B cell (primary cell): ENCODE measurements at regions of chr21 and their contacts with region 1.

Region 1: DNA sequence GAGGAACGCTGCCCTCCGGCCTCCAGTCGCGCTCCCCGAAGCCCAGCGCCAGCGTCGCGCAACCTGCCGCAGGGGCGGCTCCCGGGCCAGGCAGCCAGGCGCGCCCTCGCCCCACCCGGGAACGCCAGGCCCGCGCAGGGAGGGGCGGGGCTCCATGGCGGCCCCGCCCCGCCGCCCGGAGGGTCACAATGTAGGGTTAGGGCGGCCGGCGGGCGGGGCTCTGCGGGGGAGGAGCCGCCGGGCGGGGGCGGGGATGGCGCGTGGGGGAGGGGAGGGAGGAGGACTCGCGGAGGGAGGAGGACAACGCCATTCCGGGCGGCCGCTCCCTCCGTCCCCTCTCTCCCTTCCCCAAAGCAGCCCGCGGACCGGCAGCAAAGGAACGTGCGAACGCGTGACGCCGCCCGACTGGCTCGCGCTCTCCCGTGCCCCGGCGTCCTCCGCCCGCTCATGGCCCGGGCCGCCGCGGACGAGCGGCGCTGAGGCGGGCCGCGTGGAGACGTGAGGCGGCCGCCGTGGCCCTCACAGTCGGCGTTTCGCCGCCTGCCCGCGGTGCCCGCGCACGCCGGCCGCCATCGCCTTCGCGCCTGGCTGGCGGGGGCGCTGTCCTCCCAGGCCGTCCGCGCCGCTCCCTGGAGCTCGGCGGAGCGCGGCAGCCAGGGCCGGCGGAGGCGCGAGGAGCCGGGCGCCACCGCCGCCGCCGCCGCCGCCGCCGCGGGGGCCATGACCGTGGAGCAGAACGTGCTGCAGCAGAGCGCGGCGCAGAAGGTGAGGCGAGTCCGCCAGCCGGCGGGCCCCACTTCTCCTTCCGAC is at the start of gene USP25:
- DNase-seq: peak; percentile 92
- ATAC-seq: peak; percentile 87
- H3K4me3 ChIP-seq: peak within 1 kb of the TSS; percentile 56 to 96 (median 73)
- H3K4me3 Mint-ChIP-seq: peak within 1 kb of the TSS; percentile 95
- H3K27ac ChIP-seq: peak within 1 kb of the TSS; percentile 53 to 82
- H3K27ac Mint-ChIP-seq: peak within 1 kb of the TSS; percentile 93
- H3K4me1 ChIP-seq: peaks cover 18 to 31% of the 10 kb centered on the region in 2 donors
- H3K4me1 Mint-ChIP-seq: peaks cover 36% of the 10 kb centered on the region
- H3K27me3 ChIP-seq: no peaks in the 10 kb centered on the region
- H3K27me3 Mint-ChIP-seq: peaks cover 6% of the 10 kb centered on the region
- CTCF ChIP-seq: no peak
- total RNA-seq, gene USP25: 53.2 and 55.5 TPM in 2 replicates

Region 2: GRCh38 chr21:14382835-14383594 is 1346.9 kb before region 1 on chr21 and contains the start of gene HSPA13:
- CTCF ChIA-PET with region 1: no interaction called
- POLR2A ChIA-PET with region 1: no interaction called
- intact Hi-C with region 1: loop called (anchors 1 kb)
- DNase-seq: peak; percentile 100
- ATAC-seq: peak; percentile 93
- H3K4me3 ChIP-seq: peak within 1 kb of the TSS; percentile 85 to 95 (median 88)
- H3K4me3 Mint-ChIP-seq: peak within 1 kb of the TSS; percentile 100
- H3K27ac ChIP-seq: peak within 1 kb of the TSS; percentile 91 to 96
- H3K27ac Mint-ChIP-seq: peak within 1 kb of the TSS; percentile 98
- H3K4me1 ChIP-seq: peaks cover 10 to 11% of the 10 kb centered on the region in 2 donors
- H3K4me1 Mint-ChIP-seq: peaks cover 37% of the 10 kb centered on the region
- H3K27me3 ChIP-seq: no peaks in the 10 kb centered on the region
- H3K27me3 Mint-ChIP-seq: no peaks in the 10 kb centered on the region
- CTCF ChIP-seq: no peak
- total RNA-seq, gene HSPA13: 19.1 and 19.3 TPM in 2 replicates

Region 3: DNA sequence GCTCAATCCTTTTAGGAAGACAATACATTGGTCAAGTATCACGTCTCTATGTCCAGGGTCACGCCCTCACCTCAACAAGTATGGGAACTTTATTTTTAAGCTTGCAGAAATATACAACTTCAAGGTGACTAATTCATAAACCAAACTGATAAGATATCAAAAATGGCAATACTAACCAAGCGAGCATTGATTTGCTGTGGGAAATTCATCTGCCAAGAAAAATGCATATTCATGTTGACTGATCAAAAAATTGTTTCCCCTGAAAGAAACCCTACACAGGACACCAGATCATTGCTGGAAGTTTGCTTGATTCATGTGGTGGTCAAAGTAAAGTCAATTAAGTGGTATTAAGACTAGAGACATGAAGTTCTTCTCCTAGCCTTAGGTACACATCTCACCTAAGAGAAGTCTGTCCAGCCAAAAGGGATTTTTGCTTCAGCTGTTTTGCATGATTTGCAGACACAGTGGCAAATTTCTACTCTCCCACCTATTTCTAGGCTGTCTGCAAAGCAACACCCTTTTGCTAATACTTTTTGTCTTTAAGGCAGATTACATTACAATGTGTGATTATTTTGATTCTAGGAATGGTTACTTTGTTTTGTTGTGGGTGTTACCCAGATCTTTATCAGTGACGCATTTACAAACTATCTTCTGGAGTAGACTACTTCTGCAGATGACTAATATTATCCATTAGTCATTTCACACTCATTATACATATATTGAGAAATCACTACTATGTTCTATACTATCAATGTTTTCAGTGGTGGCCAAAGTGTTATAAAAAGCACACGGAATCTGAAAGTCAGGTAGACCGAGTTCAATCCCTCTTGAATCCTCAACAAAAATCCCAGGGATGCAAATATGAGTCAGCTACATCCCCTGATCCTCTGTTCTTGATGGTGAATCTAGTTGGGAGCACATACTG is 1196.1 kb before region 1 on chr21:
- CTCF ChIA-PET with region 1: no interaction called
- POLR2A ChIA-PET with region 1: no interaction called
- intact Hi-C with region 1: loop called (anchors 10 kb)
- DNase-seq: peak; percentile 76
- ATAC-seq: peak; percentile 77
- H3K4me3 ChIP-seq: peak overlapping the region in 4 of 5 experiments; percentile 13 to 54 (median 30)
- H3K4me3 Mint-ChIP-seq: peak overlapping the region; percentile 81
- H3K27ac ChIP-seq: peak overlapping the region; percentile 77 to 92
- H3K27ac Mint-ChIP-seq: peak overlapping the region; percentile 95
- H3K4me1 ChIP-seq: peaks cover 22 to 31% of the 10 kb centered on the region in 2 donors
- H3K4me1 Mint-ChIP-seq: peaks cover 58% of the 10 kb centered on the region
- H3K27me3 ChIP-seq: no peaks in the 10 kb centered on the region
- H3K27me3 Mint-ChIP-seq: no peaks in the 10 kb centered on the region
- CTCF ChIP-seq: no peak

Region 4: GRCh38 chr21:14675774-14676530 is 1053.9 kb before region 1 on chr21:
- CTCF ChIA-PET with region 1: no interaction called
- POLR2A ChIA-PET with region 1: no interaction called
- intact Hi-C with region 1: loop called (anchors 5 kb)
- DNase-seq: peak; percentile 67
- ATAC-seq: peak; percentile 80
- H3K4me3 ChIP-seq: peak overlapping the region in 3 of 5 experiments; percentile 10 to 47 (median 24)
- H3K4me3 Mint-ChIP-seq: peak overlapping the region; percentile 57
- H3K27ac ChIP-seq: peak overlapping the region; percentile 74 to 85
- H3K27ac Mint-ChIP-seq: peak overlapping the region; percentile 91
- H3K4me1 ChIP-seq: peaks cover 44 to 46% of the 10 kb centered on the region in 2 donors
- H3K4me1 Mint-ChIP-seq: peaks cover 59% of the 10 kb centered on the region
- H3K27me3 ChIP-seq: no peaks in the 10 kb centered on the region
- H3K27me3 Mint-ChIP-seq: no peaks in the 10 kb centered on the region
- CTCF ChIP-seq: no peak

Region 5: GRCh38 chr21:15192243-15192642 is 537.6 kb before region 1 on chr21:
- CTCF ChIA-PET with region 1: no interaction called
- POLR2A ChIA-PET with region 1: no interaction called
- intact Hi-C with region 1: no loop called
- DNase-seq: no peak
- ATAC-seq: no peak
- H3K4me3 ChIP-seq: no peak overlapping the region
- H3K4me3 Mint-ChIP-seq: no peak overlapping the region
- H3K27ac ChIP-seq: no peak overlapping the region
- H3K27ac Mint-ChIP-seq: no peak overlapping the region
- H3K4me1 ChIP-seq: no peaks in the 10 kb centered on the region
- H3K4me1 Mint-ChIP-seq: no peaks in the 10 kb centered on the region
- H3K27me3 ChIP-seq: no peaks in the 10 kb centered on the region
- H3K27me3 Mint-ChIP-seq: peaks cover 7% of the 10 kb centered on the region
- CTCF ChIP-seq: no peak

Region 6: DNA sequence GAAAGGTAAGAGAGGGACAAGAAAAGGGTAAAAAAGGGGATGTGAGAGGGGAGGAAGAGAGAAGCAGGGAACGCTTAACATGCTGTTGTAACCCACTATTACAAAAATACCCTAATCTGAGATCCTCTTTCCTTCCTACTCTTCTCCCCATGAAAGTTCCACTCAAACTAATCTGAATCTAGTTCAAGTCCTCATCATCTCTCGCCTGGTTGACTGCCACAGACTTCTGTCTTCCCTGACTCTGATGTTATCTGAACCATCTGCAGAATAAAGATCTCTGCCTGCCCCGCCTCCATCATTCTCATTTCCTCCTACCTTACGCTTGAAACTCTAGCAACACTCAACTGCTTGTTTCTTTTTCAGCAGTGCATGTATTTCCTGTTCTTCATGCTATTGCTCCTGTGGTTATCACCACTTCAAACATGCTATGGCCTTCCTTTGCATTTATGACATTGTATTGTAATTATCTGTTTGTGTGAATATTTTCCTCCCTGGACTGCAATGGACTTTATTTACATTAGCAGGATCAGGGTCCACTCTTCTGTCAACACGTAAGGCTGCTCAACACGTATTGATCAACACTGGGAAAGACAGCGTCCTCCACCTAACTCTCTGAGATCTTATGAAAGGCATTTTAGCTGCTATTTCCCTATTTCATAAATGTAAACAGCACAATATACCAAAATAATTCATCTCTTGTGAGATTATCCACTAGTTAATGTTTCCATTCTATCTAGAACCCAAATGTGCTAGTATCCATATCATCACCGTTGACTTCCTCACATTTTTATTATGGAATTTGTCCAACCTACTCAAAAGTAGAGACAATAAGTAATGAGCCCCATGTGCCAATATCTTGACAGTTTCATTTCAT is 215.6 kb before region 1 on chr21:
- CTCF ChIA-PET with region 1: no interaction called
- POLR2A ChIA-PET with region 1: no interaction called
- intact Hi-C with region 1: loop called (anchors 10 kb)
- DNase-seq: peak; percentile 82
- ATAC-seq: peak; percentile 98
- H3K4me3 ChIP-seq: peak overlapping the region in 2 of 5 experiments; percentile 21 to 35
- H3K4me3 Mint-ChIP-seq: peak overlapping the region; percentile 52
- H3K27ac ChIP-seq: peak overlapping the region; percentile 62 to 83
- H3K27ac Mint-ChIP-seq: peak overlapping the region; percentile 82
- H3K4me1 ChIP-seq: peaks cover 20 to 21% of the 10 kb centered on the region in 2 donors
- H3K4me1 Mint-ChIP-seq: peaks cover 18% of the 10 kb centered on the region
- H3K27me3 ChIP-seq: no peaks in the 10 kb centered on the region
- H3K27me3 Mint-ChIP-seq: no peaks in the 10 kb centered on the region
- CTCF ChIP-seq: no peak

Region 7: GRCh38 chr21:15534450-15534886 is 195.4 kb before region 1 on chr21:
- CTCF ChIA-PET with region 1: no interaction called
- POLR2A ChIA-PET with region 1: no interaction called
- intact Hi-C with region 1: no loop called
- DNase-seq: peak; percentile 32
- ATAC-seq: no peak
- H3K4me3 ChIP-seq: peak overlapping the region in 2 of 5 experiments; percentile 8 to 16
- H3K4me3 Mint-ChIP-seq: peak overlapping the region; percentile 61
- H3K27ac ChIP-seq: no peak overlapping the region
- H3K27ac Mint-ChIP-seq: peak overlapping the region; percentile 46
- H3K4me1 ChIP-seq: peaks cover 9 to 11% of the 10 kb centered on the region in 2 donors
- H3K4me1 Mint-ChIP-seq: peaks cover 10% of the 10 kb centered on the region
- H3K27me3 ChIP-seq: no peaks in the 10 kb centered on the region
- H3K27me3 Mint-ChIP-seq: peaks cover 24% of the 10 kb centered on the region
- CTCF ChIP-seq: no peak

Region 8: DNA sequence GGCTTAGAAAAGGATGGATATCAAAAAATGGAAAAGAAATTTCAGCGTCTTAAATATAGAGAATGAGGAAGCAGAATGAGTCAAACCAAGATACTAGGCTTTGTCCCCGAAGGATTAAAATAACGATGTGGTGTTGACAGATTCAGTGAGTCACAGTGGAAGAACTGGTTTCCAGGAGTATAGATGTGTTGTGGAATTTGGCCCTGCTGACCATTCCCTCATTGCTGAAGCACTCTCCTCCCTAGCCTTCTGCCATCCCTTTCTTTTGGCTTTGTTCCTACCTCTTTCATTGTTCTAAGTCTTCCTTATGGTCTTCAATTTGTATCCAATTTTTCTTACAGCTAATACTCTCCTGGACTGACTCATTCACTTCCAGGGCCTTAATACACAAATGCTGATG is 23.2 kb before region 1 on chr21:
- CTCF ChIA-PET with region 1: no interaction called
- POLR2A ChIA-PET with region 1: no interaction called
- intact Hi-C with region 1: no loop called
- DNase-seq: no peak
- ATAC-seq: no peak
- H3K4me3 ChIP-seq: no peak overlapping the region
- H3K4me3 Mint-ChIP-seq: no peak overlapping the region
- H3K27ac ChIP-seq: no peak overlapping the region
- H3K27ac Mint-ChIP-seq: no peak overlapping the region
- H3K4me1 ChIP-seq: no peaks in the 10 kb centered on the region
- H3K4me1 Mint-ChIP-seq: no peaks in the 10 kb centered on the region
- H3K27me3 ChIP-seq: peaks cover 0 to 3% (median 0%) of the 10 kb centered on the region in 4 experiments
- H3K27me3 Mint-ChIP-seq: peaks cover 28% of the 10 kb centered on the region
- CTCF ChIP-seq: no peak

Region 9: GRCh38 chr21:15775981-15776380 is 46.1 kb after region 1 on chr21:
- CTCF ChIA-PET with region 1: no interaction called
- POLR2A ChIA-PET with region 1: no interaction called
- intact Hi-C with region 1: loop called (anchors 5 kb)
- DNase-seq: no peak
- ATAC-seq: no peak
- H3K4me3 ChIP-seq: no peak overlapping the region
- H3K4me3 Mint-ChIP-seq: no peak overlapping the region
- H3K27ac ChIP-seq: no peak overlapping the region
- H3K27ac Mint-ChIP-seq: no peak overlapping the region
- H3K4me1 ChIP-seq: no peaks in the 10 kb centered on the region
- H3K4me1 Mint-ChIP-seq: peaks cover 15% of the 10 kb centered on the region
- H3K27me3 ChIP-seq: no peaks in the 10 kb centered on the region
- H3K27me3 Mint-ChIP-seq: no peaks in the 10 kb centered on the region
- CTCF ChIP-seq: no peak

Region 10: GRCh38 chr21:15820852-15821379 is 91.0 kb after region 1 on chr21:
- CTCF ChIA-PET with region 1: interaction called, 3 read pairs
- POLR2A ChIA-PET with region 1: no interaction called
- intact Hi-C with region 1: loop called (anchors 5 kb)
- DNase-seq: no peak
- ATAC-seq: no peak
- H3K4me3 ChIP-seq: no peak overlapping the region
- H3K4me3 Mint-ChIP-seq: no peak overlapping the region
- H3K27ac ChIP-seq: no peak overlapping the region
- H3K27ac Mint-ChIP-seq: no peak overlapping the region
- H3K4me1 ChIP-seq: no peaks in the 10 kb centered on the region
- H3K4me1 Mint-ChIP-seq: no peaks in the 10 kb centered on the region
- H3K27me3 ChIP-seq: no peaks in the 10 kb centered on the region
- H3K27me3 Mint-ChIP-seq: no peaks in the 10 kb centered on the region
- CTCF ChIP-seq: no peak